ENCODE measurements at regions of chr22 and their contacts with region 1.

Region 1: DNA sequence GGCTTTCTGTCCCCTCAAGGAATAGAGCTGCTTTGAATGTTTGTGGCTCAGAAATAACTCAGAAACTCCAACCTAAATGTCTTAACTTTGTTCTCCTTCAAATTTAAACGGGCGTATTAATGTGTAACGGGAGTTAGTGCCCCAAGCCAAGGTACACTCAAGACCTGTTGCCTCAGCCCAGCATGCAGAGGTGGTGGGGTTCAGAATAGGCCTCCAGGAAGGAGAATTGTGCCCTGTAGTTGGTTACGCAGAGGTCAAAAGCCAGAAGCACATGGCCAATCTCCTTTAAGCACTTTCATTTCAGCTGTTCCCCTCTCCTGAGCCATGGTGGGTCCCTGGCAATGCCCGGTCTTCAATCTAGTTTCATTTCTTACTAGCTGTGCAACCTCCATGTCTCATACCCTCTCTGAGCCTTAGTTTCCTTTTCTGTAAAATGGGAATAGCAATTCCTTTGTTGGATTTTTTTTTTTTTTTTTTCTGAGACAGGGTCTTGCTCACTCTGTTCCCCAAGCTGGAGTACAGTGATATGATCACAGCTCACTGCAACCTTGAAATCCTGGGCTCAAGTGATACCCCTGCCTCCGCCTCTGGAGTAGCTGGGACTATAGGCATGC is 4.2 kb downstream of the HMOX1 start:
- DNase-seq: no peak
- H3K27ac ChIP-seq: no peak overlapping the region
- CTCF ChIP-seq: no peak

Region 2: DNA sequence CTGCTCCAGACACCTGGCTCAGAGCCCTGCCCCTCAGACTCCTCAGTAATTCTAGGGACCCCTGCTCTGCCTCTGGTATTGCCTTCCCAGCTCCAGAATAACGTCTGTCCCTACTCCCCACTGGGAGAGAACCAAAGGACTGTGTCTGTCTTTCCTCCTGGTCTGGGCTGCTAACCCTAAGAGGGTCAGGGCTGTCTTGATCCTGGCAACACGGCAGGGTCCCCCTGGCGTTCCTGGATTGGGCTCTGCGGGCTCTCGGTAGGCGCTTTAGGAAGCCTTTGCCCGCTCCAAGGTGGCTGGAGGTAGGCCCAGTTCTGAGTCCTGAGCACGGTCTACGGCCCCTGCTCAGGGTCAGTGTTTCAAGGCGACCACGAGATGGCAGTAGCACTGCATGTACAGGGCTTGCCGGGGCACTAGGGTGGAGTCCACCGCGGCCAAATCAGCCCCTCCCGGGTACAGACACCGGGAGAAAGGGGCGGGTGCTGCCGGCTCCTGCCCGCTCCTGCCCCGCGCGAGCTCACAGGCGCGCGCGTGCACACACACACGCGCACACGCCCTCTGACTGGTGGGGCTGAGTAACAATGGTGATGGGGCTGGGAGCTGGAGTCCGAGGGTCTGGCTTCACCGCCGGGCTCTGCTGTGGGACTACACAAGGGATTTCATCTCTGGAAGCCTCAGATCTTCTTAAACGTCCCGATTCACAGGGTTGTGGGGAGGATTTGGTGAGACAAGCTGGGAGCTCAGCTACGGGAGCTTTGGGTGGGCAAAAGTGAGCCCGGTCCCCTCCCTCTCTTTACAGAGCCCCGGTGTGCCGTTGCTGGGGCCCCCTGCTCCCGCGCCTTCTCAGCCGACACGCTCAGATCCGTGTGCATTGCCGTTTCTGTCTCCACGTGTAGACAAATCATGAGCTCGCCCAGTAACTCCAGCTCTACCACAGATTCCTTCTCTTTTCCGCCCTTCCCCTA is 34.3 kb before region 1 on chr22:
- CTCF ChIA-PET with region 1: no interaction called
- POLR2A ChIA-PET with region 1: interaction called, 16 read pairs
- DNase-seq: peak; percentile 87
- H3K27ac ChIP-seq: peak overlapping the region; percentile 68
- CTCF ChIP-seq: peak; percentile 86